Tibial artery (tissue), 4 donors: ENCODE measurements at regions of chr13 and their contacts with region 1.

Region 1: GRCh38 chr13:24293746-24294145 is 15.6 kb upstream of the C1QTNF9 start:
- DNase-seq: no peak
- H3K4me3 ChIP-seq: no peak overlapping the region
- H3K27ac ChIP-seq: no peak overlapping the region
- H3K4me1 ChIP-seq: no peaks in the 10 kb centered on the region
- H3K27me3 ChIP-seq: no peaks in the 10 kb centered on the region
- CTCF ChIP-seq: no peak

Region 2: DNA sequence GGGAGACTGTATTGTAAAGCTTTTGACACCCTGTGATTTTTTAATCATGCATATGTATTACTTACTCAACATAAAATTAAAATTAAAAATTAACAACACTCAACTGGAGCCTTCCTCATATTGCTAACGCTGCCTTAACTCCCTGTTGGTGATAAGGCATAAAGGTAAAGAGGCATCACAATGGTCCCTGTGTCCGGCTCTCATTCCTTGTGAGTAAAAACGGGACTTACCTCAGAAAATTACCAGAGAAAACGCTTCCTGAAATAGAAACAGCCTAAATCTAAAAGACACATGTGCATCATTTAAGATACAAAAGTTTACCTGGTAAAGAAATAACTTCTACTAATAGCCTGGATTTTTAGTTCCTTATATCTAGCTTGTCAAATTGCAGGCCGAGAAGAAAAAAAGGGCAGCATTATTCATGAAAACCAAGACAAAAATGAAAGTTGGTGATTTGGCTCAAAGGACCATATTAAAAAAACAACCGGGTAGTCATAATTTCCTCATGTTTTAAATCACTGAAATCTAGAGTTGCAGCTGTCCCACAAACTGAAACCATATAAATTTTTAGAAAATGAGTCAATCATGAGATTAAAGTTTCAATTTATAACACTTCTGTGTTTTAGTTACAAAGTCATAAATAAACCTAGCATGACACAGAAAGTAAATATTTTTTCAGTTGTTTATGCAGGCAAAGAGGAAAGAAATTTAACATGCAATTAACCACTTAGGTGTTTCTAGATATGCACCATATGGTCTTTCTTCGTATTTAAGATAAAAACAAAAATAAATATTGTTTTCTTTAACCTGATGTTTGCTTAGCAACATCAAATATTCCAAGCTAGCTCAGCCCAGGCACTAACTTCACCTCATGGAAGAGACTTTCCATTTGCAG is 499.2 kb before region 1 on chr13:
- intact Hi-C with region 1: no loop called
- DNase-seq: no peak
- H3K4me3 ChIP-seq: peak overlapping the region in 1 of 2 donors; percentile 6
- H3K27ac ChIP-seq: peak overlapping the region; percentile 32 to 63
- H3K4me1 ChIP-seq: peaks cover 0 to 27% (median 2%) of the 10 kb centered on the region in 4 donors
- H3K27me3 ChIP-seq: no peaks in the 10 kb centered on the region
- CTCF ChIP-seq: no peak

Region 3: GRCh38 chr13:26272621-26273020 is 1978.9 kb after region 1 on chr13:
- intact Hi-C with region 1: loop called (anchors 5 kb)
- DNase-seq: no peak
- H3K4me3 ChIP-seq: no peak overlapping the region
- H3K27ac ChIP-seq: no peak overlapping the region
- H3K4me1 ChIP-seq: peaks cover 0 to 14% (median 0%) of the 10 kb centered on the region in 4 donors
- H3K27me3 ChIP-seq: no peaks in the 10 kb centered on the region
- CTCF ChIP-seq: no peak